Calu3 (cell line): ENCODE measurements at regions of chr19 and their contacts with region 1.

Region 1: GRCh38 chr19:42794765-42795164 is 29.3 kb upstream of the PSG8 start:
- DNase-seq: no peak
- H3K4me3 Mint-ChIP-seq: no peak overlapping the region
- H3K27ac Mint-ChIP-seq: no peak overlapping the region
- H3K4me1 Mint-ChIP-seq: peaks cover 17% of the 10 kb centered on the region
- H3K27me3 Mint-ChIP-seq: no peaks in the 10 kb centered on the region
- CTCF ChIP-seq: no peak

Region 2: DNA sequence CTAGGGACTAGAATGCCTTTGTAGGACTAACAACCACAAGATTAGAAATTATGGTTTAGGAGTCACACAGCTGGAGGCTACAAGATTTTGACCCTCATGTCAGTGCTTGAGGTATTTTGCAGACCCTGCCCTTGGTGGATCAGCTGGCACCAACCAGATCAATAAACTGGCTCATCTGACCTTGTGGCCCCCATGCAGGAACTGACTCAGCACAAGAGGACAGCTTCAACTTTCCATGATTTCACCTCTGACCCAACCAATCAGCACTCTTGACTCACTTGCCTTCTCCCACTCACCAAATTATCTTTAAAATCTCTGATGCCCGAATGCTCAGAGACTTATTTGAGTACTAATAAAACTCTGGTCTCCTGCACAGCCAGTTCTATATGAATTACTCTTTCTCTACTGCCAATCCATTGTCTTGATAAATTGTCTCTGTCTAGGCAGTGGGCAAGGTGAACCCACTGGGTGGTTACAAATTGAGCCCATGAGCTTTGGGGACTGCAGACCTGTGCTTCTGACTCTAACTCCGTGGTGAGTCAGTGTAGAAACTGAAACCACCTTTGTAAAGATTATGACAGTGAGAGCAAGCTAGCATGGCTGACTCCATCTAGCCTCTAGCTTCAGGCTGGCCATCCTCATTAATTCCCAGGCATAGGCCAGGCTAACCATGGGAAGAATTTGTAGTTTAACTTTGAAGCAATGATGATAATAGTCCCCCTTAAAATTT is 166.2 kb before region 1 on chr19:
- CTCF ChIA-PET with region 1: no interaction called
- intact Hi-C with region 1: no loop called
- DNase-seq: no peak
- H3K4me3 Mint-ChIP-seq: no peak overlapping the region
- H3K27ac Mint-ChIP-seq: no peak overlapping the region
- H3K4me1 Mint-ChIP-seq: peaks cover 8% of the 10 kb centered on the region
- H3K27me3 Mint-ChIP-seq: peaks cover 100% of the 10 kb centered on the region
- CTCF ChIP-seq: no peak

Region 3: DNA sequence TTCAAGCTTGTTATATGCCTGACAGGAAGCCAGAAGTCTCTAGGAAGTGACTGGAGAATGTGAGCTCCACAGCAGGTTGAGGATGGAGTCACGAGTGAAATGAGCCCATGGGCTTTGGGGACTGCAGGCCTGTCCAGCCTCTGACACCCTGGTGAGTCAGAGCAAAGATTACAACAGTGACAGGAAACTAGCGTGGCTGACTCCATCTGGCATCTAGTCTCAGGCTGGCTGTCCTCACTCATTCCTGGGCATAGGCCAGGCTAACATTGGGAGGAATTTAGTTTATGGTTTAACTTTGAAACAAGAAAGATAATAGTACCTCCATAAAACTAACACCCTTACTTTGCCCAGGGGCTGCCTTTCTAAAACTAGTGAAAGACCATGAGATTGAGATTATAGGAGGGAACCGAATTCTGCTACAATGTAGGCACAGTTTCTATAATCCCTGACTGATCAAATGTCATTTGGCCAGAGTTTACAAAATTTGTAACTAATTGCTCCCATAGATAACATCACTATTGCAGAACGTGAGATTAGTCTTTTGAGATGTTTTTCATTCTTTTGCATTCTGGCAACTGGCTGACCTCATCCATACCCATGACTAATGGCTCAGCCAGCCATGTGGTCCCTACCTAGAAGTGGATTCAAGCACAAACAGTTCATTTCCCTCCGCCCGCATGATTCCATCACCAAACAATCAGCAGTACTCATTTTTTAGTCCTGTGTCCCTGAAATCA is 56.4 kb after region 1 on chr19:
- CTCF ChIA-PET with region 1: no interaction called
- intact Hi-C with region 1: loop called (anchors 10 kb)
- DNase-seq: peak; percentile 74
- H3K4me3 Mint-ChIP-seq: no peak overlapping the region
- H3K27ac Mint-ChIP-seq: peak overlapping the region; percentile 65
- H3K4me1 Mint-ChIP-seq: peaks cover 70% of the 10 kb centered on the region
- H3K27me3 Mint-ChIP-seq: no peaks in the 10 kb centered on the region
- CTCF ChIP-seq: no peak

Region 4: DNA sequence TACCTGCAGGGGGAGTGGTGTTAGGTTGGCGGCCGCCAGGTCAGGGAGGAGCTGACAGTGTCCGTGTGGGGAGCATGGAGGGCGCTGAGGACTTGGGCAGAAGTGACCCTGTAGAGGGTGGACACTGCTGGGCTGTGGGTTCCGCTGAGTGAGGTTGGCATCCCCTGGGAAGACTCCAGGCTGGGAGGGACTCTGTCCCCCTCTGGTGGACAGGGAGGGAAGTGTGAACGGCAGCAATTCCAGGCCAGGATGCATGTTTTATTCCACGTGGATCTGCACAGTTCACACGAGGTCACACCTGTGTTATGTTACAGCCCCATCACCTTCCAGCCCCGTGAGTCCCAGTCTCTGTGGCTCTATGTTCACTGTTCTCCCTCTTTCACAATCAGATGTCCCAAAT is 86.5 kb after region 1 on chr19:
- CTCF ChIA-PET with region 1: interaction called, 4 read pairs
- intact Hi-C with region 1: loop called (anchors 1 kb)
- DNase-seq: peak; percentile 23
- H3K4me3 Mint-ChIP-seq: no peak overlapping the region
- H3K27ac Mint-ChIP-seq: no peak overlapping the region
- H3K4me1 Mint-ChIP-seq: peaks cover 21% of the 10 kb centered on the region
- H3K27me3 Mint-ChIP-seq: peaks cover 14% of the 10 kb centered on the region
- CTCF ChIP-seq: peak; percentile 47